ENCODE measurements at regions of chrX and their contacts with region 1.

Region 1: DNA sequence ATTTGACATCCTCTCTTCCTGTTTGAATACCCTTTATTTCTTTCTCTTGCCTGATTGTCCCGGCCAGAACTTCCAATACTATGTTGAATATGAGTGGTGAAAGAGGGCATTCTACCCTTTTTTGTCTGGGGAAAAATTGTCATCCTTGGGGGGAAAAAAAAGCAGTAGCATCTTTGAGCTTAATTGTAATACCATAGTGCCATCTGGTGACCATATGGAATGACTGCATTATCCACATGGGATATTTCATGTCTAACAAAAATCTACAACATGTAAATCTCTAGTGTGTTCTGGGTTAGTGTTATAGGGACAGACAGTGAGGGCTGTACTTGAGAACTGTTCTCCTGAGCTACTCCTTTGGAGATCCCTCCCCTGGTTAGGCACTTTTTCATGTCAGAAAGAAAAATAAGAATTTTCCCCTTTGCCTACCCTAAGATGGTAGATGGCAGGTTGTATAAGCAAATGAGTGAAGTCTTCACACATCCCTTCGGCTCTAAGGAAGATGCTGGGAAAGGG is 26.0 kb downstream of the CAPN6 start:
- DNase-seq: peak; percentile 14
- ATAC-seq: no peak
- H3K4me3 ChIP-seq: no peak overlapping the region
- H3K27ac ChIP-seq: no peak overlapping the region
- H3K4me1 ChIP-seq: no peaks in the 10 kb centered on the region
- H3K27me3 ChIP-seq: peaks cover 9% of the 10 kb centered on the region
- CTCF ChIP-seq: peak; percentile 57
- POLR2A ChIP-seq: no peak
- RAD21 ChIP-seq: peak; percentile 63

Region 2: GRCh38 chrX:110853610-110854009 is 390.7 kb before region 1 on chrX:
- CTCF ChIA-PET with region 1: no interaction called
- POLR2A ChIA-PET with region 1: no interaction called
- dilution Hi-C with region 1: no loop called
- in situ Hi-C with region 1: loop called (anchors 10 kb)
- intact Hi-C with region 1: loop called (anchors 5 kb)
- DNase-seq: no peak
- ATAC-seq: 0 out of 2 replicates have a peak, but pooled peaks have one; percentile 29
- H3K4me3 ChIP-seq: no peak overlapping the region
- H3K27ac ChIP-seq: no peak overlapping the region
- H3K4me1 ChIP-seq: no peaks in the 10 kb centered on the region
- H3K27me3 ChIP-seq: peaks cover 24% of the 10 kb centered on the region
- CTCF ChIP-seq: 0 out of 2 replicates have a peak, but pooled peaks have one; percentile 24
- POLR2A ChIP-seq: no peak
- RAD21 ChIP-seq: no peak

Region 3: GRCh38 chrX:110992611-110993010 is 251.7 kb before region 1 on chrX:
- CTCF ChIA-PET with region 1: no interaction called
- POLR2A ChIA-PET with region 1: no interaction called
- dilution Hi-C with region 1: no loop called
- in situ Hi-C with region 1: no loop called
- intact Hi-C with region 1: loop called (anchors 1 kb)
- DNase-seq: peak; percentile 13
- ATAC-seq: no peak
- H3K4me3 ChIP-seq: no peak overlapping the region
- H3K27ac ChIP-seq: no peak overlapping the region
- H3K4me1 ChIP-seq: no peaks in the 10 kb centered on the region
- H3K27me3 ChIP-seq: peaks cover 11% of the 10 kb centered on the region
- CTCF ChIP-seq: peak; percentile 44
- POLR2A ChIP-seq: no peak
- RAD21 ChIP-seq: peak; percentile 35

Region 4: DNA sequence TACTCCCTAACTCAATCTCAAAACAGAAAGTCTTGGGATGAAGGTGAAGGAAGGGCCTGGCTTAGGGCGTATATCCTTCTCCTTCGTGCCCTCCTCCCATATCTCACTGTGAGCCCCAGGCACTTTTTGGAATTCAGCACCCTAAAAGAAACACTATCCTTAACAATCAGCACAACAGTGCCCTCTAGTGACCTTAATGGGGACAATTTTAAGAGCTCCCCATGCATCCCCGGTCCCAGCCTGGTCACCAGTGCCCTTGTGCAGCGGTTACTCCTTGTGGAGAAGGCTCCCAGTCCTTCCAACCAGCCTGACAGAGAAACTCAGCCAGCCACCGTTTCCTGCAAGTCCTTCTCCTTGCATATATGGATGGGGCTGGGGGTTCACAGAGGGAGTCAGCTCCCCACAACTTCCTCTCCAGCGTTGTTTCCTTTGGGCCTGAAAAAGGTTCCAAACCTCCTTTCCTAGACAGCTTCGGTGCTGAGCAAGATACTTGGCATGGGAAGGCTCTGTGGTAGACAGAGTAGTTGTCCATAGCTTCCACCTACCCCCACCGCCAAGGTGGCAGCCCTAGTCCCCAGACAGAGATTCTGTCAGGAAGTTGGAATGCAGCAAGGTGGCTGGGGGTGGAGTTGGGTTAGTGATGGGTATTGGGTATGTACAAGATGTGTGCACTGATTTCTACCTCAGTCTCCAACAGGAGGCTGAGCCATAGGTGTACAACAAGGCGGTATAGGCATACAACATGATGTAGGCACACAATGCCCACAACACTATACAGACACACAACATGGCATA is 143.9 kb before region 1 on chrX:
- CTCF ChIA-PET with region 1: no interaction called
- POLR2A ChIA-PET with region 1: no interaction called
- dilution Hi-C with region 1: no loop called
- in situ Hi-C with region 1: no loop called
- intact Hi-C with region 1: loop called (anchors 5 kb)
- DNase-seq: peak; percentile 24
- ATAC-seq: peak; percentile 48; the same call in 1 of the 2 replicates
- H3K4me3 ChIP-seq: no peak overlapping the region
- H3K27ac ChIP-seq: no peak overlapping the region
- H3K4me1 ChIP-seq: no peaks in the 10 kb centered on the region
- H3K27me3 ChIP-seq: peaks cover 17% of the 10 kb centered on the region
- CTCF ChIP-seq: peak; percentile 50
- POLR2A ChIP-seq: no peak
- RAD21 ChIP-seq: peak; percentile 49

Region 5: GRCh38 chrX:111337067-111337637 is 92.9 kb after region 1 on chrX:
- CTCF ChIA-PET with region 1: no interaction called
- POLR2A ChIA-PET with region 1: no interaction called
- dilution Hi-C with region 1: no loop called
- in situ Hi-C with region 1: no loop called
- intact Hi-C with region 1: no loop called
- DNase-seq: no peak
- ATAC-seq: no peak
- H3K4me3 ChIP-seq: no peak overlapping the region
- H3K27ac ChIP-seq: no peak overlapping the region
- H3K4me1 ChIP-seq: no peaks in the 10 kb centered on the region
- H3K27me3 ChIP-seq: peaks cover 3% of the 10 kb centered on the region; the same call in 1 of the 2 replicates
- CTCF ChIP-seq: no peak
- POLR2A ChIP-seq: no peak
- RAD21 ChIP-seq: no peak

Measured in IMR-90 (cell line).